ENCODE measurements at regions of chr4 and their contacts with region 1.

Region 1: GRCh38 chr4:47485047-47485692 is at the start of gene ATP10D:
- DNase-seq: peak; percentile 85
- CTCF ChIP-seq: no peak

Region 2: DNA sequence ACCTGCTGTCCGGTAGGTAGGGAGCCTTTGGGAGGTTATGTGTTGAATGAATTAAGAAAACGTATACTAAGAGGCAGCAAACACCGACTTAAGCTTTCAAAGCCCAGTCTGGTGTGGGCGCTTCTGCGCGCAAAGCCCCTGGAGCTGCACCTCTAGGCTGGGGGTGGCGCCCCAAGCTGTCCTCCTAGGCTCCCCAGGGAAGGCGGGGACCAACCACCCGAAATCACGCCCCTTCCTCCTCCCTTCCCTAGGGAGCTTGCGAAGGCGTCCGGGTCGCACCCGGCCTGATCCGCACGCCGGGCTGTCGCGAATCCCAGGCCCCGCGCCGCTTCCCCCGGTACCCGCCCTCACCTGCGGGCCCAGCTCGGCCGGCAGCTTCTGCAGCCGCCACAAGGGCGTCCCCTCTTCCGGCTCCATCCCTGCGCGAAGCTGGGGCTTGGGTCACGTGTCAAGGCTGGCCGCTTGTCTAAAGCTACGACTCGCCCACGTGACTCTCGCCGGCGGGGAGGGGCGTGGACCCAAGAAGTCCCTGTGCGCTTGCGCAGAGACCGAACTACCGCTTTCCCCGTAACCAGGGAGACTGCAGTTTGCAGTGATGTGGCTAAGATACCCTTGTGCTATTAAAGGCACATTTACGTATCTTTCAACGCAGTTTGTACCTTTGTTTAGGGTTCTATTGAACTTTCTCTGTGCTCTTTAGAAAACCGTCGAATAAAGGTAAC is 21.8 kb before region 1 on chr4 and contains the start of gene COMMD8:
- CTCF ChIA-PET with region 1: interaction called, 14 read pairs
- POLR2A ChIA-PET with region 1: interaction called, 10 read pairs
- DNase-seq: peak; percentile 95
- CTCF ChIP-seq: peak; percentile 33

Region 3: GRCh38 chr4:47468691-47469365 is 16.3 kb before region 1 on chr4:
- CTCF ChIA-PET with region 1: interaction called, 19 read pairs
- POLR2A ChIA-PET with region 1: interaction called, 10 read pairs
- DNase-seq: no peak
- CTCF ChIP-seq: no peak